GM13976 (cell line): ENCODE measurements at regions of chr15 and their contacts with region 1.

Region 1: DNA sequence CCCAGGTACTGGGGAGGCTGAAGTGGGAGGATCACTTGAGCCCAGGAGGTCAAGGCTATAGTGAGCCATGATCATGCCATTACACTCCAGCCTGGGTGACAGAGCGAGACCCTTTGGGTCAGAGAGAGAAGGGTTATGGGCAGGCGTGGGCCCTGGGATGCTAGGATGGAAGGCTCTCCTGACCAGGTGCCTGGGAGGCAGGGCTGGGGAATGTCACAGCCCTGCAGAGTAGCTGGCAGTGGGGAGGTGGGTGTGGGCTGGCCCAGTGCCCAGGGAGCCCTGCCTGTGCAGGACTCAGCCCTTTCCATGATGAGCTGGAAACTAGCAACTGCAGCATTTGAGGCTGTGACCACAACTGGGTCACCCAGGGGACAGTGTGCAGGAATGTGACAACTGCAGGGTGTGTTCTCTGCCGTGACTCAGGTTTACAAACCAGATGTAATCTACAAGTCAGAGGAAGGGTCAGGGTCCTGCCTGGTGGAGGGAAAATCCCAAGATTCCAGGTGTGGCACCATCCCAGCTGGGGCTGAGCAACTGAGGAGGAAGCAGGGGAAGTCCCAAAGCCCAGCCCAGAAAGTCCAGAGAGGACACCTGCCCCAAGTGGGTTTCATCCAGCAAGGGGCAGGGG is 45.4 kb downstream of the SLC28A1 start:
- DNase-seq: no peak
- CTCF ChIP-seq: no peak

Region 2: DNA sequence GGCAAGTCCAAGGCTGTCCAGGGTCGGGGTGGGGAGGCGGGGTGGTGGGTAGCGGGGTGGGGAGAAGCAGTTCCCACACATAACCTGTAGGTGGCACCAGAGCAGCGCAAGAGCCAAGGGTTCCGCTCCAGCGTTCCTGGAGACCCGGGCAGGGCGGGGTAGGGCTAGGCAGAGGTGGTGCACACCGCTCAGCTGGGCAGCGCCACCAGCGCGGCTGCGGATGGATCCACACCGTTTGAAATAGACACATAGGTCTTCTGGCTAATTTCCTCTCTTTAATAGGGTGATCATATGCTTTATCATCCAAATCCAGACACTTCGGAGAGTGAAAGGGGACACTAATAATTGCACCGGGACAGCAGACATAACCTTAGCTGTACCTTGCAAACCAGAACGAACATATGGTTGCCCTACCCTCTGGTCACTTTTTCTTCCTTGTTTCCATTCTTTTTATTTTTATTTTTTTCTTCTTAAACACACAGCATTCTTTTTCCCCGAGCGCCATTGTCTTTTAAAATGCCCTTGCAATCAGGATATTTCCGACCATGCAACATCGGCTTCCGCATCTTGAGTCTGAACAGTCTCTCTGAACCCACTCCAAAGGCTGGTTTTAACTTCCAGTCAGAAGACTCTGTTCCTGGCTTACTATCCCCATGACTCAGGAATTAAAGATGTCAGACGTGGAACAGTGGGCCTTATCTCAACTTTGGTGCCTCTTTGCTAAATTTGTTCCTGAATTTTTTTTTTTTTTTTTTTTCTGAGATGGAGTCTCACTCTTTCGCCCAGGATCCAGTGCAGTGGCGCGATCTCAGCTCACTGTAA is 341.6 kb before region 1 on chr15:
- in situ Hi-C with region 1: loop called (anchors 10 kb)
- DNase-seq: peak; percentile 91
- CTCF ChIP-seq: peak; percentile 71

Region 3: GRCh38 chr15:84826369-84826823 is 103.5 kb before region 1 on chr15:
- in situ Hi-C with region 1: loop called (anchors 25 kb)
- DNase-seq: peak; percentile 57
- CTCF ChIP-seq: peak; percentile 14